ENCODE measurements at regions of chr6 and their contacts with region 1.

Region 1: GRCh38 chr6:9520417-9521151 is 894.3 kb downstream of the TFAP2A start:
- DNase-seq: peak; percentile 79
- H3K4me3 ChIP-seq: no peak overlapping the region
- H3K27ac ChIP-seq: peak overlapping the region; percentile 76
- H3K4me1 ChIP-seq: peaks cover 61% of the 10 kb centered on the region
- H3K27me3 ChIP-seq: no peaks in the 10 kb centered on the region
- CTCF ChIP-seq: no peak

Region 2: DNA sequence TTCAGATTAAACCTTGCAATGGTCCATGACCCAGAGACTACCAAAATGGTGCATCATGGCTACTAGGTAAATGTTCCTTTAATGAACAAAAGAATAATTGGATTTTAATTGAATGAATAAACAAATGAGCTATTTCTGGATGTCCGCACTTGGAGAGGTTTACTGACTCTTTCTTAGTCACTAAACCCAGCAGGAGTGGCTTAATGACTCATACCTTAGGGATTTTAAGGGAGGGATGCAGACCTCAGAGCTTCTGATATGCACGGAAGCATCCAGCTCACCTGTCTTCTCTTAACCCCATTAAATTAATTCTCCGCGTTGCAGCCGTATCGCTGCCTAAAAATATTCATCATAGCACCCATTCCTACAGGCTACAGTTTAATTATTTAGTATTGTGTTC is 115.2 kb before region 1 on chr6:
- CTCF ChIA-PET with region 1: no interaction called
- dilution Hi-C with region 1: no loop called
- in situ Hi-C with region 1: no loop called
- intact Hi-C with region 1: loop called (anchors 10 kb)
- DNase-seq: peak; percentile 85
- H3K4me3 ChIP-seq: no peak overlapping the region
- H3K27ac ChIP-seq: peak overlapping the region; percentile 48
- H3K4me1 ChIP-seq: peaks cover 17% of the 10 kb centered on the region
- H3K27me3 ChIP-seq: no peaks in the 10 kb centered on the region
- CTCF ChIP-seq: no peak

Region 3: DNA sequence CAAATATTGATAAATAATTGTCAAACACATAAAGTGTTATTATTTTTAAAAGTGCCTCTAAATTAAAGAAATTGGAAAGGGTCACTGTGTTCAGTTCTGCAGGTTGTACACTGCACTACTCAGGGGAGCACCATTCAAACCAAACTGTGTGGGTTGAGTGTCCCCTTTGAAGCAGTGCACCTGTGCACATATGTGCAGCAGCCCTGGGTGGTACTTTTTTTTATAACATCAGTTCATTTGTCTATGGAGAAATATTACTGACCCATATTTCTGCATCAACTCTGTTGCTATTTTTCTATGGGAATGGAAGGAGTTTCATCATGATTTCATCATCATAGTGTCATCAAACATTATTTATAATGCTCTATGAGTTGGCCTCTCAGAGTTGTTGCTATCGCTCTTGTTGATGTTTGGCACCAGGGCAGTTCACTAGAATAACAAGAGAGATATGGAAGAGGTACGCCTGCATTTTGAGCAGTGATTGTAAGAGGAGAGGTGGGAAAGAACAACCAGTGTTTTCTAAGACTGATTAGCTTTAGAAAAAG is 436.7 kb after region 1 on chr6:
- CTCF ChIA-PET with region 1: no interaction called
- dilution Hi-C with region 1: no loop called
- in situ Hi-C with region 1: no loop called
- intact Hi-C with region 1: no loop called
- DNase-seq: no peak
- H3K4me3 ChIP-seq: no peak overlapping the region
- H3K27ac ChIP-seq: no peak overlapping the region
- H3K4me1 ChIP-seq: no peaks in the 10 kb centered on the region
- H3K27me3 ChIP-seq: peaks cover 3% of the 10 kb centered on the region
- CTCF ChIP-seq: no peak

Measured in mammary epithelial cell (primary cell).